Mammary epithelial cell (primary cell): ENCODE measurements at regions of chr1 and their contacts with region 1.

Region 1: DNA sequence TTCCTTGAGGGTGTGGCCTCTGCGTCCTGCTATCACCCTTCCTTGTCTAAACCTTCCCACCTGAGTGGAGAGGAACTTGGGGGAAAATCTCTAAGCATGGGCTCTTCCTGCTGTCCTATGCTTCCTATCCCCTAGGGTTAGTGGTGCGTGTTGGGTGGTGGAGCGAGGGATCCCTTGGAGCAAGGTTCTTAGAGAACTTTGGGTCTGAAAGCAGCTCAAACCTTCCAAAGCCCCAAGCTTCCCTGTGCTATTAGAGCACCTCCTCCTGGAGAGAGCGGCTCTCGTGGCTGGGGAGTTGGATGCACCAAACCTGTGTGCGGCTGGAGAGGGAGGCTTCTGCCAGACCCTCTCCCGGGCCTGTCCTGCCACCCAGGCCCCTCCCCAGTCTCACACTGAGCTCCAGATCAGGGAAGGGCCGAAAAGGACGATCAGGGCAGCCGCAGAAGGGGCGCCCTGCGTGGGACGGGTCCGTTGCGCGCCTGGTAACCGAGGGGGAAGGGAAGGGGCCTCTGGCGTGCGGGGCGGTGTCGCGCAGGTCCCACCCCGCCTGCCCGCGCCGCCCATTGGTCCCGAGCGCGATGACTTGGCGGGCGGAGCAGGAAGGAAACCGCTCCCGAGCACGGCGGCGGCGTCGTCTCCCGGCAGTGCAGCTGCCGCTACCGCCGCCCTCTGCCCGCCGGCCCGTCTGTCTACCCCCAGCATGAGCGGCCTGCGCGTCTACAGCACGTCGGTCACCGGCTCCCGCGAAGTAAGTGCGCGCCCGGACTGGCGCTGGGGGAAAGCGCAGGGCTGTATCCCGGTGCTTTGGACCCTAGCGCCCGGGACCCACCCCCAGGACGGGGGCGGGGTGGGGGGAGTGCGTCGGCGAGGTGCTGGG is at the start of gene SH3BGRL3:
- DNase-seq: peak; percentile 86
- H3K4me3 ChIP-seq: peak within 1 kb of the TSS; percentile 70 to 88 (median 73)
- H3K27ac ChIP-seq: peak within 1 kb of the TSS; percentile 86
- H3K4me1 ChIP-seq: peaks cover 90% of the 10 kb centered on the region
- H3K27me3 ChIP-seq: no peaks in the 10 kb centered on the region
- CTCF ChIP-seq: peak; percentile 40 to 69
- total RNA-seq, gene SH3BGRL3: 15.8 to 497 TPM

Region 2: DNA sequence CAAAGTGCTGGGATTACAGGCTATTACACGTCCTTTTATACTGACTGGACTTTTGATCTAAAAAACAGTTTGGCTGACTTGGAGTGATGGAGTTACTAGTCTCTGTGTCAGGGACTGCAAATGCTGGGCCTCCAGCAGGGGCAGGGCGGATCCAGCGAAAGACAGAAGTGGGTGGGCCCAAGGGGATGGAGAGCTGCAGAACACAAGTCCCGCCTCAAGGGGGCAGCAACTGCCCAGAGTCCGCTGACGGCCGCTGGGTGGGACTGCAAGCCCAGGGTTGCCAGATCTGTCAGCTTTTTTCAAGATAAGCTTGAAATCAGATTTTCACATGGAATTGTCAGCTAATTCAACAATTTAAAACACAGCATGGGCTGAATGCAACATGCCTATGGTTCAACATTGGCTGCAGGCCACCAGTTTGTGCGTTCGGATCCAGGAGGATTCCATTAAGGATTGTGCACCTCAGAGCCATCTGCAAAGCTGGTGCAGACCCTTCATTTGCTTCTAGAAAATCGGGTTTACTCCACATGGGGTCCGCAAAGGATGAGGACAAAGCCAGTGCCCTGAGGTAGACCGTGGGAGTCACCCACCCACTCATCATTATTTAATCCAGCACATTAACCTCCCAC is 384.2 kb before region 1 on chr1:
- CTCF ChIA-PET with region 1: no interaction called
- dilution Hi-C with region 1: no loop called
- in situ Hi-C with region 1: loop called in 1 of 2 experiments (anchors 25 kb)
- intact Hi-C with region 1: no loop called
- DNase-seq: peak; percentile 77
- H3K4me3 ChIP-seq: no peak overlapping the region
- H3K27ac ChIP-seq: no peak overlapping the region
- H3K4me1 ChIP-seq: peaks cover 35% of the 10 kb centered on the region
- H3K27me3 ChIP-seq: no peaks in the 10 kb centered on the region
- CTCF ChIP-seq: peak; percentile 97 to 99

Region 3: GRCh38 chr1:26169669-26170471 is 109.8 kb before region 1 on chr1 and contains the start of gene ZNF593:
- CTCF ChIA-PET with region 1: interaction called, 7 read pairs
- dilution Hi-C with region 1: no loop called
- in situ Hi-C with region 1: no loop called
- intact Hi-C with region 1: loop called (anchors 5 kb)
- DNase-seq: peak; percentile 81
- H3K4me3 ChIP-seq: peak within 1 kb of the TSS; percentile 73 to 84 (median 76)
- H3K27ac ChIP-seq: peak within 1 kb of the TSS; percentile 75
- H3K4me1 ChIP-seq: peaks cover 9% of the 10 kb centered on the region
- H3K27me3 ChIP-seq: no peaks in the 10 kb centered on the region
- CTCF ChIP-seq: peak; percentile 83 to 94
- total RNA-seq, gene ZNF593: 31.5 to 41.5 TPM

Region 4: GRCh38 chr1:26306290-26307229 is 26.9 kb after region 1 on chr1 and contains the start of gene UBXN11:
- CTCF ChIA-PET with region 1: interaction called, 3 read pairs
- dilution Hi-C with region 1: no loop called
- in situ Hi-C with region 1: no loop called
- intact Hi-C with region 1: loop called (anchors 1 kb)
- DNase-seq: peak; percentile 93
- H3K4me3 ChIP-seq: peak within 1 kb of the TSS; percentile 81 to 91 (median 86)
- H3K27ac ChIP-seq: peak within 1 kb of the TSS; percentile 93
- H3K4me1 ChIP-seq: peaks cover 22% of the 10 kb centered on the region
- H3K27me3 ChIP-seq: no peaks in the 10 kb centered on the region
- CTCF ChIP-seq: no peak
- total RNA-seq, gene UBXN11: 6.2 to 12.9 TPM

Region 5: GRCh38 chr1:26344147-26344920 is 64.6 kb after region 1 on chr1:
- CTCF ChIA-PET with region 1: no interaction called
- dilution Hi-C with region 1: loop called (anchors 5 kb)
- in situ Hi-C with region 1: no loop called
- intact Hi-C with region 1: no loop called
- DNase-seq: no peak
- H3K4me3 ChIP-seq: no peak overlapping the region
- H3K27ac ChIP-seq: no peak overlapping the region
- H3K4me1 ChIP-seq: peaks cover 9% of the 10 kb centered on the region
- H3K27me3 ChIP-seq: no peaks in the 10 kb centered on the region
- CTCF ChIP-seq: no peak

Region 6: GRCh38 chr1:26378088-26378878 is 98.6 kb after region 1 on chr1:
- CTCF ChIA-PET with region 1: interaction called, 4 read pairs
- dilution Hi-C with region 1: no loop called
- in situ Hi-C with region 1: loop called in 1 of 2 experiments (anchors 25 kb)
- intact Hi-C with region 1: no loop called
- DNase-seq: peak; percentile 87
- H3K4me3 ChIP-seq: no peak overlapping the region
- H3K27ac ChIP-seq: peak overlapping the region; percentile 84
- H3K4me1 ChIP-seq: peaks cover 18% of the 10 kb centered on the region
- H3K27me3 ChIP-seq: no peaks in the 10 kb centered on the region
- CTCF ChIP-seq: no peak

Region 7: GRCh38 chr1:26417111-26417759 is 137.5 kb after region 1 on chr1:
- CTCF ChIA-PET with region 1: interaction called, 4 read pairs
- dilution Hi-C with region 1: no loop called
- in situ Hi-C with region 1: no loop called
- intact Hi-C with region 1: loop called (anchors 1 kb)
- DNase-seq: peak; percentile 66
- H3K4me3 ChIP-seq: no peak overlapping the region
- H3K27ac ChIP-seq: no peak overlapping the region
- H3K4me1 ChIP-seq: no peaks in the 10 kb centered on the region
- H3K27me3 ChIP-seq: peaks cover 21% of the 10 kb centered on the region
- CTCF ChIP-seq: peak; percentile 86 to 96

Region 8: GRCh38 chr1:26627954-26628353 is 348.3 kb after region 1 on chr1:
- CTCF ChIA-PET with region 1: no interaction called
- dilution Hi-C with region 1: no loop called
- in situ Hi-C with region 1: no loop called
- intact Hi-C with region 1: no loop called
- DNase-seq: no peak
- H3K4me3 ChIP-seq: no peak overlapping the region
- H3K27ac ChIP-seq: no peak overlapping the region
- H3K4me1 ChIP-seq: no peaks in the 10 kb centered on the region
- H3K27me3 ChIP-seq: no peaks in the 10 kb centered on the region
- CTCF ChIP-seq: no peak